Motor neuron (in vitro differentiated cells): ENCODE measurements at regions of chr13 and their contacts with region 1.

Region 1: GRCh38 chr13:50928659-50929462 is 19.3 kb downstream of the RNASEH2B start:
- ATAC-seq: peak in 2 of 8 experiments; percentile 58 to 86
- H3K4me3 ChIP-seq: no peak overlapping the region
- H3K27ac ChIP-seq: no peak overlapping the region
- H3K4me1 ChIP-seq: no peaks in the 10 kb centered on the region

Region 2: DNA sequence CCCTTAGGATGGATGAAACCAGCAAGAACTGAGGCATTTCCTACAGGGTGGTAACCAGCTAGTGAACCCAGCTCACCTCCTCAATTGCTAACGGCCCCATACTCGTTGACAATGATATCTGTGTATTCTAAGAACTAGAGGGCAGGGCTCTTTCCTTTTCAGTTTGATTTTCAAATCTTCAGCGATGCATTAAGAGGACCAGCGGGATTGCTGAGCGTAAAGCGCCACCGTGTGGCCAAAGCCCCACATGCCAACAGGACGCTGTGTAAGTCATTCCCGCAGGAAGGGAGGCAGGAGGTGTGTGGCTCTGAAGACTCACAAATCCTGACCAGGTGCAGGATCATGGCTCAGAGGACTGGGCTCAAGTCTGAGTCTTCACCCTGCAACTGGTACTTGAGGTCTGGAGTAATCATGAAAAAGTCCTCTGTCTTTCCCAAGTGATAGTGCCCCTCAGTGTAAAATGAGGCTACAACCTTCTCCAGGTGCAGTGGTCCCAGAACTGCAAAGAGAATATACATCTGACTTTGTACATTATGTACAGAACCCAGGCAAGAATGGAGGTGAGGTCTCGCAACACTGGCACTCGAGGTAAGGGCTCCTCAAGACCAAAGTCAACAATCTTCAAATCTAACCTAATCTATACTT is 141.3 kb after region 1 on chr13:
- in situ Hi-C with region 1: loop called in 1 of 9 experiments (anchors 10 kb)
- ATAC-seq: peak; percentile 87 to 98 (median 92)
- H3K4me3 ChIP-seq: no peak overlapping the region
- H3K27ac ChIP-seq: no peak overlapping the region
- H3K4me1 ChIP-seq: peaks cover 12 to 19% of the 10 kb centered on the region in 2 donors

Region 3: GRCh38 chr13:51435002-51435578 is 506.2 kb after region 1 on chr13:
- in situ Hi-C with region 1: no loop called
- ATAC-seq: peak in 1 of 8 experiments; percentile 17
- H3K4me3 ChIP-seq: no peak overlapping the region
- H3K27ac ChIP-seq: no peak overlapping the region
- H3K4me1 ChIP-seq: no peaks in the 10 kb centered on the region